ENCODE measurements at regions of chr4 and their contacts with region 1.

Region 1: GRCh38 chr4:182745240-182745639 is 171.9 kb downstream of the DCTD start:
- DNase-seq: no peak

Region 2: DNA sequence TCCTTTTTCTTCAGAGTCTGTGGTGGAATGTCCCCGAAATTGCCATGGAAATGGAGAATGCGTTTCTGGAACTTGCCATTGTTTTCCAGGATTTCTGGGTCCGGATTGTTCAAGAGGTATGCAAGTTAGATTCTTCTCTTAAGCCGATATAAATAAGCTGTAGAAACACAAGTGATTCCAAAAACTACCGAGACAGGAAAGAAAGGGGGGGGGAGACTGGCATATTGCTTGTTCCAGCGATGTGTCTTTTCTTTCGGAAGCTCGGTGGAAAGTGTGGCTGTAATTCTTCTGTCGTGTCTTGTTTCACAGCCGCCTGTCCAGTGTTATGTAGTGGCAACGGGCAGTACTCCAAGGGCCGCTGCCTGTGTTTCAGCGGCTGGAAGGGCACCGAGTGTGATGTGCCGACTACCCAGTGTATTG is 65.0 kb before region 1 on chr4:
- intact Hi-C with region 1: loop called (anchors 5 kb)
- DNase-seq: no peak